ENCODE measurements at regions of chr11 and their contacts with region 1.

Region 1: GRCh38 chr11:10653926-10654810 is 39.4 kb downstream of the IRAG1 start:
- DNase-seq: peak; percentile 50
- H3K4me3 Mint-ChIP-seq: no peak overlapping the region
- H3K27ac Mint-ChIP-seq: no peak overlapping the region
- H3K4me1 Mint-ChIP-seq: peaks cover 14% of the 10 kb centered on the region
- H3K27me3 Mint-ChIP-seq: no peaks in the 10 kb centered on the region

Region 2: DNA sequence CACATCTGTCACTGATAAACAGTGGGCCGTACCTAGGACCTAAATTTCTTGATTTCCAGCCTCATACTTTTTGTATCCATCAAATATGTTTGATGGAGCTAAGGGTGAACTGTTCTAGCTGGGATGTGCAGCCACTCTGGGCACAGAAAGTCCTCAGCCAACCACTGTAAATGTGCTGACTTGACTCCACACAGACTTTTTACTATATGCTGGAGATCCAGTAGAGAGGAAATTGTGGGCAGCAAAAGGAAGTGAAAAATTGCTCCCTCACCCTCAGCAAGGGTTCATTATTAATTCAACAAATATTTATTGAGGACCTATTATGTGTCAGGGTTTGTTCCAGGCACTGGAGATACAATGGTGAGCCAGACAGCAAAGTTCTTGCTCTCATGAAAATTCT is 253.3 kb before region 1 on chr11:
- CTCF ChIA-PET with region 1: interaction called, 40 read pairs
- POLR2A ChIA-PET with region 1: no interaction called
- intact Hi-C with region 1: loop called (anchors 1 kb)
- DNase-seq: no peak
- H3K4me3 Mint-ChIP-seq: no peak overlapping the region
- H3K27ac Mint-ChIP-seq: no peak overlapping the region
- H3K4me1 Mint-ChIP-seq: peaks cover 5% of the 10 kb centered on the region
- H3K27me3 Mint-ChIP-seq: peaks cover 2% of the 10 kb centered on the region

Region 3: GRCh38 chr11:10413268-10413667 is 240.9 kb before region 1 on chr11:
- CTCF ChIA-PET with region 1: interaction called, 68 read pairs
- POLR2A ChIA-PET with region 1: no interaction called
- intact Hi-C with region 1: loop called (anchors 1 kb)
- DNase-seq: peak; percentile 54
- H3K4me3 Mint-ChIP-seq: no peak overlapping the region
- H3K27ac Mint-ChIP-seq: no peak overlapping the region
- H3K4me1 Mint-ChIP-seq: peaks cover 31% of the 10 kb centered on the region
- H3K27me3 Mint-ChIP-seq: no peaks in the 10 kb centered on the region

Region 4: DNA sequence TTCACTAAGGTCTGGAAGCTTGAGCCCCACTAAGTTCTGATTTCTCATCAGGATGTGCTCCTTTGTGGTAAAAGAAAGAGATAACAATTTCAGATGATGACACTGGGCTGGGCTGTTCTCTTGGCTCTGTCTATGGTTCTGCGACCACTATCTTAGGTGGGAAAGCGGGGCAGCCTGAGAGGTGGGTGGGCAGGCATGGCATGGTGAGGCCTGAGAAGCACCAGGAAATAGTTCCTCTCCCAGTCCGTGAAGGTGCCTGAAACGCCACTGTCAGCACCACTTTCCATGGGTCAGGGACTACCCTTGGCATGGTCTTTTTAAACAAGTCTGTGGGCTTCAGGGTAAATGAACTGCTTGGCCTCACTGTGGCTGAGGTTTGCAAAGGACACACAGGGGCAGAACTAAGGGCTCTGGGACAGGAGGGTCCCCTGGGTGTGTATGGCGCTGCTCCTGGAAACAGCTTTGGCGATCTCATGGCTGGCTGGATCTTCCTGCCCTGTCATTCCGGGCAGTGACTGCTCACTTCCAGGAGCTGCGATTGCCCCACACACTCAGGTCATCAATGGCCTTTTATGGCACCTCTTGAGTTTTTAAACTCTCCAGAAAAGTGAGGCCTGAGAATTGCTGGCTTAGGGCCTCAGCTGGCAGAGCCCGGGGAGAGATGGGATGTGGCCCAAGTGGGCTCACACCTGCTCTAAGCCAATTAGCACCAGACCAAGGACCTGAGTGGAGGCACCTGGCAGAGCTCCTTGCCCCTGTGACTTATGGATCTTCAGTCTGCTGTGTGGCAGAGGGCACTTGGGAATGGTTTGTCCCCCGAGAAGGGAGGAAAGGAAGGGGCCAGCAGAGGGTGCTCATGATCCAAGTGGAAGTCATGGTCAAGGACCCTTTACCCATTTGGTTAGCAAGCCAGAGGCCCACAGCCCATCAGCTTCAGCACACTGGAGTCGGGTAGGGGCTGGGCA is 30.1 kb before region 1 on chr11:
- CTCF ChIA-PET with region 1: interaction called, 11 read pairs
- POLR2A ChIA-PET with region 1: no interaction called
- intact Hi-C with region 1: loop called (anchors 2 kb)
- DNase-seq: peak; percentile 19
- H3K4me3 Mint-ChIP-seq: no peak overlapping the region
- H3K27ac Mint-ChIP-seq: peak overlapping the region; percentile 32
- H3K4me1 Mint-ChIP-seq: peaks cover 16% of the 10 kb centered on the region
- H3K27me3 Mint-ChIP-seq: no peaks in the 10 kb centered on the region